Calu3 (cell line): ENCODE measurements at regions of chr15 and their contacts with region 1.

Region 1: DNA sequence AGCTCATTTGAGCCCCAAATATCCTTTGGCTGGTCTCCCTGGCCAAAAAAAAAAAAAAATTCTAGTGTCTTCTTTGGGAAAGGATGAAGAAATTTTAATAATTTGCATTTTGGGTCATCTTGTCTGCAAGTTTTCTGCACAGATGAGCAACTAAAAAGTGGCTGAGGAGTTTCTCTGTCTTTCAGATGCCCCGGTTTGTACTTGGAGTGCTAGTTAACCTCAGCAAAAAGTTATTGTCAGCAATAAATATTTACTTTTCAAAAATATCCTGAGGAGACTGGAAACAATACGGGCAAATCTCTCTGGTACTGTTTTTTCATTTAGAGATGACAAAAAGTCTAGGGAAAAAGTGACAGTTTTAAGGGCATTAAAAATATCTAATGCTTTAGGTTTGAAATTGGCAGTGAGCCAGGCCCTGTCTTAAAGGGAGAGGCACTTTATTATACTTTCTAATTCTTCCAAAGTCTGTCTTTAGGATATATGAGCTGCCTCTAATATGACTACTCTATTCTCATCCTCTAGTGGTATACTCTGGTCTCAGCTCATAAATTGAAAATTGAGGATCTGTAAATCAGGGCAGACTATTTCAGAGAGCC is 436.0 kb upstream of the NR2F2 start:
- DNase-seq: no peak
- H3K4me3 Mint-ChIP-seq: no peak overlapping the region
- H3K27ac Mint-ChIP-seq: no peak overlapping the region
- H3K4me1 Mint-ChIP-seq: peaks cover 8% of the 10 kb centered on the region
- H3K27me3 Mint-ChIP-seq: no peaks in the 10 kb centered on the region
- CTCF ChIP-seq: no peak

Region 2: GRCh38 chr15:95910643-95911212 is 16.3 kb after region 1 on chr15:
- CTCF ChIA-PET with region 1: interaction called, 11 read pairs
- intact Hi-C with region 1: no loop called
- DNase-seq: no peak
- H3K4me3 Mint-ChIP-seq: no peak overlapping the region
- H3K27ac Mint-ChIP-seq: no peak overlapping the region
- H3K4me1 Mint-ChIP-seq: no peaks in the 10 kb centered on the region
- H3K27me3 Mint-ChIP-seq: no peaks in the 10 kb centered on the region
- CTCF ChIP-seq: no peak